Upper lobe of right lung (tissue), 1 donor: ENCODE measurements at regions of chr2 and their contacts with region 1.

Region 1: GRCh38 chr2:217886720-217887309 is 116.0 kb downstream of the TNS1 start:
- DNase-seq: peak; percentile 81
- ATAC-seq: peak; percentile 75
- H3K4me3 ChIP-seq: no peak overlapping the region
- H3K27ac ChIP-seq: peak overlapping the region; percentile 47
- H3K4me1 ChIP-seq: peaks cover 37% of the 10 kb centered on the region
- H3K27me3 ChIP-seq: no peaks in the 10 kb centered on the region
- CTCF ChIP-seq: peak; percentile 78

Region 2: DNA sequence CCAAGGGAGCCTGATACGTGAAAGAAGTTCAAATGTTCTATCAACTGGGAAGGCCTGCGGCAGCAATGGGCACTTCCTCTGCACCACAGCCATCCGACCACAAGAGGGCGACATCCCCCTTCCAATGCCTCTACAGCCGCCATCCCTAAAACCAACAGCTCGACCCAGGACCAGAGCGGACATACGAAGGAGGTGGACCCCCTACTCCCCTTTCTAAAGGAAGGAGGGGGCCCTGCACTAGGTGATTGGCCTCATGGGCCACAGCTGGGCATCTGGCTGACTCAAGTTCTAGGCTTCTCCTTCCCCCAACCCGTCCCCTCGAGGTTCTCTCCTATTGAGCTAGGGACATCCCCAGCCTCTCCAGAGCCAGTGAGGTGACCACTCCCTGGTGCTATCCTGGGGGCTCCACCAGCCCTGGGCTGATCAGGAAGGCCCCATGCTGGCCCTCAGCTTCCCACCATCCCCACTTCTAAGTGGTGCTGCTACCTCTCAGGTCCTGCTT is 101.2 kb before region 1 on chr2:
- intact Hi-C with region 1: loop called (anchors 5 kb)
- DNase-seq: peak; percentile 86
- ATAC-seq: peak; percentile 89
- H3K4me3 ChIP-seq: no peak overlapping the region
- H3K27ac ChIP-seq: no peak overlapping the region
- H3K4me1 ChIP-seq: peaks cover 11% of the 10 kb centered on the region
- H3K27me3 ChIP-seq: no peaks in the 10 kb centered on the region
- CTCF ChIP-seq: peak; percentile 94

Region 3: DNA sequence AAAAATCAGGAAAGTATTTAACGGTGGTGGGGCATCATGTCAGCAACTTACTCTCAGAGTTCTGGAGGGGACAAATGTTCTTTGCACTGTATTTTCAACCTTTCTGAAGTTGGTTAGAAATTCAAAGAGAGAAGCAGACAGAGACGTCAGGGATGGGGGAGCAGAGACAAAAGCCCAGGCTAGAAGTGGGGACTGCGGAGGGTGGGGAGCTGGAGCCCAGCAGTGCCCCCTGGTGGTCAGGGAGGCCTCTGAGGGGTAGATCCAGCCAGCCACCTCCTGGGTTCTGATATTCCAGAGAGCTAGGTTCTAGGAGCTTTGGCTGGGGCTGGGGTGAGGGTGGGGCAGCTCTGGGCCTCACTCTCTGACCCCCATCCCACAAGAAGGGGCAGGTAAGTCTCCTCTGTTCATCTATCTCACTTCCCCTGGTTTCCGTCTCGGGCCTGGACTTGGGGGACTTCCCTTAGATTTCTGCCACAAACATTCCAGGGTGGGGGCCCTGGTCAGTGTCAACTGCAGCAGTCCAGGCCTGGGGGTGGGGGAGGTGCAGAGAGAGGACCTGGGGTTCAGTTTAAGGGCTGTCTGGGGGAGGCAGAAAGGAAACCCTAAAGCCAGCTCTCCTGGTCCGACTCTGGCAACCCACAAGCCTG is 107.1 kb after region 1 on chr2:
- intact Hi-C with region 1: loop called (anchors 10 kb)
- DNase-seq: peak; percentile 83
- ATAC-seq: peak; percentile 77
- H3K4me3 ChIP-seq: no peak overlapping the region
- H3K27ac ChIP-seq: peak overlapping the region; percentile 6
- H3K4me1 ChIP-seq: peaks cover 28% of the 10 kb centered on the region
- H3K27me3 ChIP-seq: no peaks in the 10 kb centered on the region
- CTCF ChIP-seq: peak; percentile 78

Region 4: GRCh38 chr2:218063486-218063885 is 176.7 kb after region 1 on chr2:
- intact Hi-C with region 1: no loop called
- DNase-seq: no peak
- ATAC-seq: peak; percentile 65
- H3K4me3 ChIP-seq: no peak overlapping the region
- H3K27ac ChIP-seq: no peak overlapping the region
- H3K4me1 ChIP-seq: no peaks in the 10 kb centered on the region
- H3K27me3 ChIP-seq: no peaks in the 10 kb centered on the region
- CTCF ChIP-seq: no peak